Activated CD8-positive, alpha-beta T cell treated with anti-CD3 and anti-CD28 coated beads, Interleukin-2, amount 10 ng/mL, durations not matched to agents 7 days and 5 days (primary cell): ENCODE measurements at regions of chr3 and their contacts with region 1.

Region 1: DNA sequence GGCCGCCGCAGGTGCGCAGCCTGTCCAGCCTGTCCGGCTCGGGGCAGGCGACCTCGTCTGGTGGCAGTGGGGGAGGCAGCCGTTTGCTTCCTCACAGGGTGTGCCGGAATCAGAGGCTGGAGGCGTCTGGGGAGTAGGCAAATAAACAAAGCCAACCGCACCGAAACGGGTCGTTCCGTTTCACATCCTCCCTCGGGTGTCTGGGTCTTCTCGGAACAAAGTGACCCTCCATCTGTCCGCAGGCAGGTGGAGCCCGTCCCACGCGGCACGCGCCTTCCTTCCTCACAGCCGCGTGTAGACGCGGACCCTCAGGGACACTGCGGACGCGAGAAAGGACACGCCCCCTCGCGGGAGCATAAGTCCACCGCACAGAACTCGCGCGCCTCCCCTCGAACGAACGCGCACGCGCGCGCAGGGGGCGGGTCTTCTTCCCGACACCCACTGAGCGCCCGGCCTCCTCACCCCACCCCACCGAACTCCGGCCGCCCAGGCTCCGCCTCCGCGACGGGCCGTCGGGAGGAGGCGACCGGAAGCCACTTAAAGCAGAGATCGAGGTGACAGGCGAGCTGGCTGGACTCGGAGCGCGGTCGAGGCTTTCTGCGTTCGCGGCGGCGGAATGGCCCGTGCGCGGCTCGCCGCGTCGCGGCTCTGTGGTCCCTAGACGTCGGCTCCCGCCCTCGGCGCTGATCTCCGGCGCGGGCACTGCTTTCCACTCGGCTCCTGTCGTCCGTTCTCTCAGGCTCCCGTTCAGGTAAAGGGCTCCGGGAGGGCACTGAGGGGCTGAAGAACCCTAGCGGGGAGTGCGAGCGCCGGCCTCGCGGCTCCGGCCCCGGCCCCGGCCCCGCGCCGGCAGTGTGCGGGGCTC is at the start of gene TIPARP:
- DNase-seq: peak; percentile 99
- ATAC-seq: peak; percentile 81
- H3K4me3 Mint-ChIP-seq: peak within 1 kb of the TSS; percentile 95
- H3K27ac Mint-ChIP-seq: peak within 1 kb of the TSS; percentile 98
- H3K4me1 Mint-ChIP-seq: peaks cover 41% of the 10 kb centered on the region
- H3K27me3 Mint-ChIP-seq: no peaks in the 10 kb centered on the region
- total RNA-seq, gene TIPARP: 34.2 to 36.5 TPM

Region 2: DNA sequence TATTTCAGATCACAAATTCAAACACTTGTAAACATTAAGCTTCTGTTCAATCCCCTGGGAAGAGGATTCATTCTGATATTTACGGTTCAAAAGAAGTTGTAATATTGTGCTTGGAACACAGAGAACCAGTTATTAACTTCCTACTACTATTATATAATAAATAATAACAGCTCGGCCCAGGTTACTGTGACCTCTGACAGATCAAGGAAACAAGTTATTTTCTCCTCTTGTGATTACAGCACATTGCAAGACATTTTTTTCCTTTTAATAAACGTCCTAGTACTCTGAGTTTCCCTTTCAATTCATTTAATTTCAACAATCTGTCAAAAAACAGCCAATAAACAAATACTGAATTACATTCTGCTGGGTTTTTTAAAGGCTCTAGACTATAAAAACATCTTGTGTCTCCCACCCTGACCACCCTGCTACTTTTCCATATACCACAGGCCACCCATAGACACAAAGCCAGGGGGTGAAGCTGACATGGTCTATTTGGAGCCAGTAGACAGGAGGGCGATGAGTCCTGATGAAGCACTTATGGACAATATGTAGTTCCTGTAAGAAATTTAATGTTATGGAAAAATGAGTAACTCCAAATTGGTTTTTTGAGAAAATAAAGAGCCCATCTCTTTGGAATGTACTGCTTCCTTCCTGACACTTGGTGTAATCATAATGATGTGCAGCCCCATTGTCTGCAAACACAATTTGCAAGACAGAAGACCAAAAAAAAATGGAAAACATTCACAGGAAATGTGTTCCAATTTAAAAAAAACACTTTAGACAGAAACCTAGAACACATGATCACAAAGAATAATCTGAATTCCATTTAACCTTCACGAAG is 131.3 kb before region 1 on chr3:
- CTCF ChIA-PET with region 1: interaction called, 13 read pairs
- POLR2A ChIA-PET with region 1: interaction called, 3 read pairs
- DNase-seq: no peak
- ATAC-seq: no peak
- H3K4me3 Mint-ChIP-seq: no peak overlapping the region
- H3K27ac Mint-ChIP-seq: peak overlapping the region; percentile 3
- H3K4me1 Mint-ChIP-seq: peaks cover 21% of the 10 kb centered on the region
- H3K27me3 Mint-ChIP-seq: no peaks in the 10 kb centered on the region

Region 3: DNA sequence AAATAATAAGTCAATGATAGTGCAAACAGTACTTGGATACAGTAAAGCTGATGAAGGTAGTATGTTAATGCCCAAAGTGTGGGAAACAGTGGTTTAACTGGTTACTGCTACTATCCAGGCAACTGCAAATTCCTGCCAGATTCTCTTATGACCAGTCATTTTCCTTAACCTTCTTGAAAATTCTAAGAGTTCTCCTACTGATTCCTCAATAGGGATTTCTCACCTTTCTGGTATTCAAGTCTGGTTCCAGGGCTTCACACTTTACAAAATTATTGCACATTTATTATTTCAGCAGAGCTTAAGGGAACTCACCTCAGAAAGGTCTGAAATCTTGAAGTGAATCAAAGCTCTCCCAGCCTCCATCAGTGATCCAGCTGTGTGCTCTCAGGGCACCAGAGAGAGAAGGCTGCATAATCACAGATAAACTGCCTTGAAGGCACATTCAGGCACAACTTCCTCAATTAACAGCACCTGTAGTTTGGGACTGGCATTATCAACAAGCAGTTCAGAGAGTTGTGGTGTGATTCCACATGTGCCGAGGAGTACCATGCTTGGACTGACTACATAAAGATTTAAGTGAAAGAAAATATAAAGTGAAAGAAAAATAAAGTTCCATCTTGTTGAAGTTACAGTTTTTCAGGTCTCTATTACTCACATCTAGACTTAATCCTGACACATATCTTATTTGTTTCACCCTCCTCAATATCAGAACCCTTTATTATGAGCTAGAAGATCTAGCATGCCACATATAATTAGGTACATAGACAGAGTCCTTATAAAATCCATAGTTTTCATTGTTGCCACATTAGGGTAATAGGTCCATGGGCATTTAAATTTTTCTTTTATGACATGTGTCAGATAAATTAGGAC is 59.4 kb before region 1 on chr3:
- CTCF ChIA-PET with region 1: interaction called, 12 read pairs
- POLR2A ChIA-PET with region 1: interaction called, 4 read pairs
- DNase-seq: no peak
- ATAC-seq: no peak
- H3K4me3 Mint-ChIP-seq: no peak overlapping the region
- H3K27ac Mint-ChIP-seq: no peak overlapping the region
- H3K4me1 Mint-ChIP-seq: peaks cover 6% of the 10 kb centered on the region
- H3K27me3 Mint-ChIP-seq: peaks cover 3% of the 10 kb centered on the region

Region 4: DNA sequence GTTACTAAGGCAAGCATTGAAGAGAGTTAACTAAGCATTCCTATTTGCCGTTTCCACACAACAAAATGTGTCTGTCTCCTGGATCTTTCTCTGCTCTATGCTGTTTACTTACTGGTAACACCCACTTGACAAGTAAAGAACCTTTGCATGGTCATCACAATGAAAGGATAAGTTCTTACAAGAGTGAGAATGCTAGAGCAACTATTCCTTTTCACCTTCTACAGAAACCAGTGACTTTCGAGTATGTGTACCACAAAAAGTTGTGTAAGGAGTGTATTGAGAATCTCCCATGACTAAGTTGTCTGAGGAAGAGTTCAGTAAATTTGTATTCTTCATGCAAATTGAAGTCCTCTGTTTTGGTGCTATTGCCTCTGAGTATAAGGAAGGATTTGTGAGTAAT is 10.9 kb after region 1 on chr3:
- CTCF ChIA-PET with region 1: interaction called, 12 read pairs
- POLR2A ChIA-PET with region 1: interaction called, 13 read pairs
- DNase-seq: no peak
- ATAC-seq: no peak
- H3K4me3 Mint-ChIP-seq: peak overlapping the region; percentile 9
- H3K27ac Mint-ChIP-seq: peak overlapping the region; percentile 50
- H3K4me1 Mint-ChIP-seq: peaks cover 85% of the 10 kb centered on the region
- H3K27me3 Mint-ChIP-seq: no peaks in the 10 kb centered on the region

Region 5: GRCh38 chr3:156705761-156706631 is 31.7 kb after region 1 on chr3:
- CTCF ChIA-PET with region 1: no interaction called
- POLR2A ChIA-PET with region 1: no interaction called
- DNase-seq: no peak
- ATAC-seq: no peak
- H3K4me3 Mint-ChIP-seq: no peak overlapping the region
- H3K27ac Mint-ChIP-seq: no peak overlapping the region
- H3K4me1 Mint-ChIP-seq: peaks cover 44% of the 10 kb centered on the region
- H3K27me3 Mint-ChIP-seq: no peaks in the 10 kb centered on the region

Region 6: DNA sequence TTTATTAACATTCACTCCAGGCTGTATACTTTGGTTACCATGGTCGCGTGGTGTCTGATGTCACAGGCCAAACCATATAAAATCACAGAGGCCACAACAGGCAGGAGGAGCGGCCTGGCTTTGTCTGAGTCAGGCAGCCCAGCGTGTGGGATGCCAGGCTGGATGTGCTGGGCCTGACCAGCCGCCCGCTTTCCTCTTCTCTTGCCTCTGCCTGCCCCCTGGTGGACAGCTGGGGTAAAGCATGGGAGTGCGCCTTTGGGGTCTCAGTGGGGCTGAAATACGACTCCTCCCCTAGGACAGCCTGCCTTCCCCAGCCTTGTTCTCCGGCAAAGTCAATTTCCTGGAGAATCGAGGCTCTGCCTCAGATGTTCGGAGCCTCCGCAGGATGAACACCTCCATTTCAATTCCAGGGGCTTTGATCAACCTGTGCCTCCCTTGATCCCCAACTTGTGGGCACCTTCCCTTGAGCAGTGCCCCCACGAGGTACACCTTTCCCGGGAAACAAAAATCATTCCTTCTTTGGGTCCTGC is 407.5 kb after region 1 on chr3:
- CTCF ChIA-PET with region 1: interaction called, 33 read pairs
- POLR2A ChIA-PET with region 1: interaction called, 3 read pairs
- DNase-seq: peak; percentile 87
- ATAC-seq: peak; percentile 95
- H3K4me3 Mint-ChIP-seq: no peak overlapping the region
- H3K27ac Mint-ChIP-seq: peak overlapping the region; percentile 53
- H3K4me1 Mint-ChIP-seq: peaks cover 28% of the 10 kb centered on the region
- H3K27me3 Mint-ChIP-seq: no peaks in the 10 kb centered on the region

Region 7: GRCh38 chr3:157130467-157131251 is 456.4 kb after region 1 on chr3:
- CTCF ChIA-PET with region 1: interaction called, 140 read pairs
- POLR2A ChIA-PET with region 1: interaction called, 18 read pairs
- DNase-seq: peak; percentile 78
- ATAC-seq: peak; percentile 41
- H3K4me3 Mint-ChIP-seq: peak overlapping the region; percentile 50
- H3K27ac Mint-ChIP-seq: peak overlapping the region; percentile 92
- H3K4me1 Mint-ChIP-seq: peaks cover 89% of the 10 kb centered on the region
- H3K27me3 Mint-ChIP-seq: no peaks in the 10 kb centered on the region

Region 8: GRCh38 chr3:157159762-157160657 is 485.7 kb after region 1 on chr3 and contains the start of gene CCNL1:
- CTCF ChIA-PET with region 1: interaction called, 3 read pairs
- POLR2A ChIA-PET with region 1: interaction called, 34 read pairs
- DNase-seq: peak; percentile 96
- ATAC-seq: peak; percentile 80
- H3K4me3 Mint-ChIP-seq: peak within 1 kb of the TSS; percentile 88
- H3K27ac Mint-ChIP-seq: peak within 1 kb of the TSS; percentile 93
- H3K4me1 Mint-ChIP-seq: peaks cover 53% of the 10 kb centered on the region
- H3K27me3 Mint-ChIP-seq: no peaks in the 10 kb centered on the region
- total RNA-seq, gene CCNL1: 257 TPM